Right ventricle myocardium inferior (tissue), 1 donor: ENCODE measurements at regions of chr3 and their contacts with region 1.

Region 1: DNA sequence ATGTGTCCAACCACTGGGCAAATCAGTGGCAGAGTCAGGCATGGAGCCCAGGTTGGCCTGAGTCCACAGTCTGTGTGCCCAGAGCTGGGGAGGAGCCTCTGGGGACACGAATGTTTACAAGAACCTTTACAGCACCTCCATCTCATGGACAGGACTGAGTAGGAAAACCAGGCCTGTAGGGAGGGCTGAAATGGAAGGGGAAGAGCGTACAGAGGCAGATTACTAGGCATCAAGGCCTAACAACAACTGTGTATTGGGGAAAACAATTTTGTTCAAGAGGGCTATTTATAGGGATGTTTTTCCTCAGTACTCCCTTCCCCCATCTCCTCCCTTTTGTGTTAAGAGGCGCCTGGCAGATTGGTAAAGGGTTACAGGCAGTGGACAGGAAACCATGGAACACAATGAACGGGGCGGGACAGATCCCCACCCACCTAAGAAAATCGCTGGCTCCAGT is 15.1 kb upstream of the ARHGAP31 start:
- DNase-seq: peak; percentile 79
- ATAC-seq: peak; percentile 83

Region 2: DNA sequence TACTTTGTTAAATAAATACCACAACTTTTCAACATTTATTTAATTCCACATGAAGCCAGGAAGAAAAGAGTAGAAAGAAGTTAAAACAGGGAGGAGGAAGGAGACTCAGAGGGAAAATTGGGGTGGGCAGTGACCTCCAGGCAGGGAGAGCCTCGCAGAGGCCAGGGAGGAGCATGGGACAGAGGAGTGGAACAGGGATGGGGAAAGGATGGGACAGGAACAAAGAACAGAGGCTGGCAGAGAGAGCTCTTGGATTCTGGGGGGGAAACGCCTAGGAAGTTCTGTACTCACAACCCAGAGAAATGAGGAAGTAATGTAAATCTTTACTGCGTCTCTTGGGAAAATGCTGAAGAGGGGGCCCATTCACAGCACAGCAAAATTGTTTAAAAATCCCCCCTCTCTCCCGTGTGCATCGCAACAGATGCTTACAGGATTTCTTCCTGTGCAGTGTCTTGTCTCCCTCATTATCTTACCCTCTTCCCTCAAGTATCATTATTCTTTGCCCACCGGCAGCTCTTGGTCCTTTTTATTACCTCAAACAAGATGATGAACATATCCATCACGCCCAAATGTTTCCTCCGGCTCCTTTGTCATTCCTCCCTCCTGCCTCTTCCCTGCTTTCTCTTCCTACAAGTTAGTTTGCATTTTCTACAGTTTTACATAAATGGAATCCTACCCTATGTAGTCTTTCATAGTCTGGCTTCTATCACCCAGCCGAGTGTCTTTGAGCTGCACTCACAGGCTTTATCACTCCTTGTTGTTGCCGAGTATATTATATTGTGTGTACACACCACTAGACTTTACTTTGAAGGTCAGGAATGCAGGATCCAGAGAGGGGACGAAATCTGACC is 80.6 kb after region 1 on chr3:
- intact Hi-C with region 1: loop called (anchors 5 kb)
- DNase-seq: no peak
- ATAC-seq: no peak

Region 3: GRCh38 chr3:119388577-119388976 is 109.4 kb after region 1 on chr3:
- intact Hi-C with region 1: no loop called
- DNase-seq: no peak
- ATAC-seq: no peak

Region 4: DNA sequence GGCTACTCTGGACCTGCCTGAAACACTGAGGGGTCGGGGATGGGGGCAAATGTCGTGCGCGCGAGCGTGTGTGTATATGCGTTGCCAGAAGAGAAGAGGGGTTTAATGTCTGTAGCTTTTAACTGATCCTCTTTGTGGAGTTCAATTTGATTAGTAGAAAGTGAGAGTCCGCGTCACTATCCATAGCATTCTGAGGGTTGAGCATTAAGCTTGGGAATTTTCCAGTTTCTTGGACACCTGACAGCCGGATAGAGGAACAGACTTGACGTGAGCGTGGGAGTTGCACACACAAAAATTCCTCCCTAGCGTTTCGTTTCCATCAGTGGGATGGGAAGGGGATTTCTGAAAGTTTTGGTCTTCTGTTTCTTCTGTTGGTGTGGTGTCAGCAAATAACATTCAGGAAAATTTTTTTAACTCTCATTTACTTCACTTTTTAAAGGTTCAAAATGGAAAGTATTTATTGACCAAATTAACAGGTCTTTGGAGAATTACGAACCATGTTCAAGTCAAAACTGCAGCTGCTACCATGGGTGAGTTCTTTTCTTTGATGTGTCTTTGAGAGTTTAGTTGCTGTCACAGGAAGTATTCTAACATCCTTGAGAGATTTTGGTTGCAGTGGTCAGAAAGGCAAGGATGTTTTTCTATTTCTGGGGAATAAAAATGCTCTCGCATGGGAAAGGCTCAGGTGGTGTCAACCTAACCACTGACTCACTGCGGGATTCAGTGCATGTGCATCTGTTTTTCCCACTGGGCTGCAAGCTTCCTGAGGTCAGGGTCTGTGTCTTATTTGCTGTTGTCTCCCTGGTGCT is 190.5 kb after region 1 on chr3:
- intact Hi-C with region 1: loop called (anchors 5 kb)
- DNase-seq: peak; percentile 76
- ATAC-seq: no peak

Region 5: GRCh38 chr3:119550192-119550910 is 271.2 kb after region 1 on chr3:
- intact Hi-C with region 1: no loop called
- DNase-seq: no peak
- ATAC-seq: peak; percentile 58